ENCODE measurements at regions of chr3 and their contacts with region 1.

Region 1: DNA sequence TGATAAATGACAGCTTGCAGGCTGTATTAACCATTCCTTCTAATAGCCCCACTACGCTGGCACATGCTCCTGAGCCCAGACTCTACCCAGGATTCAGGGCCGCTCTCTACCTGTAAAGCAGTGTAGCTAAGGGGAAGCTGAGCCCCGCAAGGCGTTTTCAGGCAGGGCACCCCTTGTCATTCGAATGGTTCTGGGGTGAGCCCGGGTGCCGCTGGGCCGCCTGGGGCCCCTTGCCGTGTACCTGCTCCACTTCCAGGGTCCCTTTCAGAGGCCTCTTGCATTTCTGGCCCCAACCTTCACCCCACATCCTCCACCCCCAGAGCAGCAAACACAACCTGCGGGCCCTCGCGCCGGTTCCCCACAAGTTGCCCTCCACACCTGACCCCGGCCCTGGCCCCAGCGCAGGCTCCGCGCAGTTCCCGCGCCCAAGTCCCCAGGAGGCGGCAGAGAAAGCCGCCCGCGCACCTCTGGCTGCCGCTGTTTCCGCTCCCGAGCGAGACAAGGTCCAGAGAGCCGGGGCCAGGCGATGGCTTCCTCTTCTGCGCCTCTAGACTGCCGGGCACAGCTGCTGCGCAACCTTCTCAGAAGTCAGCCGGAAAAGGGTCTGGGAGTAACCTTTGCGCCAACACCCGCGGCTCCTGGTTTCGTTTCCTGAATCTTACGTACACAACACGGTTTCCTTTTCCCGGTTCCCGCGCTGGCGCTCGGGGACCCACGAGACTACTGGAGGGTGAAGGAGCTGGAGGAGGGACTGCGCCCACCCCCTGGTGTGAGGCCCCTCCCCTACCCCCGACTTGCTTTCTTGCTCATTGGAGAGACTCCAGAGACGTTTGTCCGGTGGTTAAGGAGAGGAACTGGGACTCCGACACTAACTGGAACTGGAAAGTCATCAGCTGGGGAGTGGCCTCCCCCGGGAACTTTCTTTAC is at the start of gene PLSCR1:
- DNase-seq: peak; percentile 25 to 84 (median 68)
- ATAC-seq: peak; percentile 76
- H3K4me3 ChIP-seq: peak within 1 kb of the TSS; percentile 74 to 89
- H3K4me3 Mint-ChIP-seq: peak within 1 kb of the TSS; percentile 93
- H3K27ac ChIP-seq: peak within 1 kb of the TSS; percentile 42 to 84
- H3K27ac Mint-ChIP-seq: peak within 1 kb of the TSS; percentile 87
- H3K4me1 ChIP-seq: peaks cover 20% of the 10 kb centered on the region
- H3K4me1 Mint-ChIP-seq: peaks cover 52% of the 10 kb centered on the region
- H3K27me3 ChIP-seq: no peaks in the 10 kb centered on the region
- H3K27me3 Mint-ChIP-seq: no peaks in the 10 kb centered on the region
- CTCF ChIP-seq: no peak
- total RNA-seq, gene PLSCR1: 7.3 to 7.5 TPM

Region 2: DNA sequence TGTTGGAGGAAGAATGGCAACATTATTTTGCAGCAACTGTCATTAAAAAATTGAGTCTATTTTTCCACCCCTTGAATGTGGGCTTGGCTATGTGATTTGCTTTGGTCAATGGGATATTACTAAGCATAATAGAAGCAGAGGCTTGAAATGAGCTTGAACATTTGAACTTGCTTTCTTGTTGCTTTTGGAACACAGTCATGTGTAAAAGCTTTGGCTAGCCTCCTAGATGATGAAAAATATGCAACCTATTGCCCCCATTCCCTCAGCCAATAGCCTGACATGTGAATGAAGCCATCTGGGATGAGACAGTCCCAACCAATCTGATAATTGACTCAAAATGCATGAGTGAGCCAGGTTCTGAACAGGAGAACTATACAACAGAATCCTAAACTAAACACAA is 153.3 kb before region 1 on chr3:
- CTCF ChIA-PET with region 1: no interaction called
- POLR2A ChIA-PET with region 1: no interaction called
- intact Hi-C with region 1: loop called in 1 of 2 experiments (anchors 5 kb)
- DNase-seq: no peak
- ATAC-seq: no peak
- H3K4me3 ChIP-seq: no peak overlapping the region
- H3K4me3 Mint-ChIP-seq: no peak overlapping the region
- H3K27ac ChIP-seq: no peak overlapping the region
- H3K27ac Mint-ChIP-seq: no peak overlapping the region
- H3K4me1 ChIP-seq: no peaks in the 10 kb centered on the region
- H3K4me1 Mint-ChIP-seq: no peaks in the 10 kb centered on the region
- H3K27me3 ChIP-seq: no peaks in the 10 kb centered on the region
- H3K27me3 Mint-ChIP-seq: peaks cover 7% of the 10 kb centered on the region
- CTCF ChIP-seq: no peak

Region 3: DNA sequence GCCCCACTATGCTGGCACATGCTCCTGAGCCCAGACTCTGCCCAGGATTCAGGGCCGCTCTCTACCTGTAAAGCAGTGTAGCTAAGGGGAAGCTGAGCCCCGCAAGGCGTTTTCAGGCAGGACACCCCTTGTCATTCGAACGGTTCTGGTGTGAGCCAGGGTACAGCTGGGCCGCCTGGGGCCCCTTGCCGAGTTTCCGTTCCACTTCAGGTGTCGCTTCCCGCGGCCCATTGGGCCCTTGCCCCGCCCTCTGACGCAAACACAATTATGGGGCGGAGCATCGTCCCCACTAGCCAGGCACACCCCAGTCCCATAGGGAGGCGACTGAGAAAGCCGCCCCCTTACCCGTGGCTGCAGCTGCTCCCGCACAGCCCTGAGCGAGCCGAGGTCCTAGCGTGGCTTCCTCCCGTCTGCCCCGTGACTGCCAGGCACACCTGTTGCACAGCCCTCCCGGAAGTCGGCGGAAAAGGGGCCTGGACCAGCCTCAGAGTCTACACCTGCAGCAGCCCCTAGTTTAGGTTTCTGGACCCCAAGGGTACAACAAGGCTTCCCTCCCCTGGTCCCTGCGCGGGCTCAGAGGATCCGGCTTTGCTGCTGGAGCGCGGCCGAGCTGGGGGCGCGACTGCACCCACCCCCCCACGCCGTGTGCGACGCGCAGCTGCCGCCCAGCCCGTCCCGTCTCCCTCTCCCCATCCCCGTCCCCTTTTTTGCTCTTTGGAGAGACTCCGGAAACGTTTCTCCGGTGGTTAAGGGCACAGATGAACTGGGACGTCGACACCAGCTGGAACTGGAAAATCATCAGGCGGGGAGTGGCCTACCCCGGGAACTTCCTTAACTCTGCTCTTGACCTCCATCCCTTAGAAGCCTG is 74.9 kb before region 1 on chr3 and contains the start of gene PLSCR2:
- CTCF ChIA-PET with region 1: no interaction called
- POLR2A ChIA-PET with region 1: interaction called, 3 read pairs
- intact Hi-C with region 1: loop called in 1 of 2 experiments (anchors 1 kb)
- DNase-seq: peak; percentile 49 to 86 (median 77)
- ATAC-seq: peak; percentile 98
- H3K4me3 ChIP-seq: peak within 1 kb of the TSS; percentile 66 to 85
- H3K4me3 Mint-ChIP-seq: peak within 1 kb of the TSS; percentile 83
- H3K27ac ChIP-seq: peak within 1 kb of the TSS; percentile 56 to 57
- H3K27ac Mint-ChIP-seq: peak within 1 kb of the TSS; percentile 82
- H3K4me1 ChIP-seq: peaks cover 7% of the 10 kb centered on the region
- H3K4me1 Mint-ChIP-seq: peaks cover 12% of the 10 kb centered on the region
- H3K27me3 ChIP-seq: no peaks in the 10 kb centered on the region
- H3K27me3 Mint-ChIP-seq: peaks cover 1% of the 10 kb centered on the region
- CTCF ChIP-seq: no peak
- total RNA-seq, gene PLSCR2: not detected

Region 4: DNA sequence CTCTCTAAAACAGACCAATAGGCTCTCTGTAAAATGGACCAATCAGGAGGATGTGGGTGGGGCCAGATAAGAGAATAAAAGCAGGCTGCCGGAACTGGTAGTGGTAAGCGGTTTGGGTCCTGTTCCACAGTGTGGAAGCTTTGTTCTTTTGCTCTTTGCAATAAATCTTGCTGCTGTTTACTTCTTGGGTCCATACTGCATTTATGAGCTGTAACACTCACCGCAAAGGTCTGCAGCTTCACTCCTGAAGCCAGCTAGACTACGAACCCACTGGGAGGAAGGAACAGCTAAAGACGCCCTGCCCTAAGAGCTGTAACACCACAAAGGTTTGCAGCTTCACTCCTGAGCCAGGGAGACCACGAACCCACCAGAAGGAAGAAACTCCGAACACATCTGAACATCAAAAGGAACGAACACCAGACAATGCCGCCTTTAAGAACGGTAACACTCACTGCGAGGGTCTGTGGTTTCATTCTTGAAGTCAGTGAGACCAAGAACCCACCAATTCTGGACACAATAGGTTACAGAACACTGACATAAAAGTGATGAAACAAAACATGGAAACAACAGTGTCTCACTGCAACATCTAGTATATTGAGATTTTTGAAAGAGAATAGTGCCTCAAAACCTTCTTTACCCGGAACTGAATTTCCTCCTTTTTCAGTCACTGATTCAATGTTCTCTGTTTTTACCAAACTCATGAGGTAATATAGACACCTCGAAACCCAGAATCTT is 46.1 kb before region 1 on chr3:
- CTCF ChIA-PET with region 1: no interaction called
- POLR2A ChIA-PET with region 1: interaction called, 3 read pairs
- intact Hi-C with region 1: loop called in 1 of 2 experiments (anchors 5 kb)
- DNase-seq: peak in 6 of 9 experiments; percentile 11 to 68 (median 39)
- ATAC-seq: peak; percentile 77
- H3K4me3 ChIP-seq: peak overlapping the region; percentile 23 to 29
- H3K4me3 Mint-ChIP-seq: peak overlapping the region; percentile 75
- H3K27ac ChIP-seq: peak overlapping the region; percentile 2 to 21
- H3K27ac Mint-ChIP-seq: peak overlapping the region; percentile 90
- H3K4me1 ChIP-seq: peaks cover 7% of the 10 kb centered on the region
- H3K4me1 Mint-ChIP-seq: peaks cover 18% of the 10 kb centered on the region
- H3K27me3 ChIP-seq: no peaks in the 10 kb centered on the region
- H3K27me3 Mint-ChIP-seq: peaks cover 2% of the 10 kb centered on the region
- CTCF ChIP-seq: no peak

Region 5: GRCh38 chr3:146611096-146611495 is 66.8 kb after region 1 on chr3:
- CTCF ChIA-PET with region 1: no interaction called
- POLR2A ChIA-PET with region 1: no interaction called
- intact Hi-C with region 1: no loop called
- DNase-seq: no peak
- ATAC-seq: no peak
- H3K4me3 ChIP-seq: no peak overlapping the region
- H3K4me3 Mint-ChIP-seq: no peak overlapping the region
- H3K27ac ChIP-seq: no peak overlapping the region
- H3K27ac Mint-ChIP-seq: no peak overlapping the region
- H3K4me1 ChIP-seq: no peaks in the 10 kb centered on the region
- H3K4me1 Mint-ChIP-seq: no peaks in the 10 kb centered on the region
- H3K27me3 ChIP-seq: no peaks in the 10 kb centered on the region
- H3K27me3 Mint-ChIP-seq: no peaks in the 10 kb centered on the region
- CTCF ChIP-seq: no peak

Region 6: GRCh38 chr3:147361454-147362420 is 817.5 kb after region 1 on chr3:
- CTCF ChIA-PET with region 1: no interaction called
- POLR2A ChIA-PET with region 1: no interaction called
- intact Hi-C with region 1: no loop called
- DNase-seq: peak in 2 of 9 experiments; percentile 3 to 5
- ATAC-seq: no peak
- H3K4me3 ChIP-seq: no peak overlapping the region
- H3K4me3 Mint-ChIP-seq: no peak overlapping the region
- H3K27ac ChIP-seq: no peak overlapping the region
- H3K27ac Mint-ChIP-seq: no peak overlapping the region
- H3K4me1 ChIP-seq: no peaks in the 10 kb centered on the region
- H3K4me1 Mint-ChIP-seq: no peaks in the 10 kb centered on the region
- H3K27me3 ChIP-seq: peaks cover 8 to 18% of the 10 kb centered on the region in 2 experiments
- H3K27me3 Mint-ChIP-seq: peaks cover 62% of the 10 kb centered on the region
- CTCF ChIP-seq: no peak